ENCODE measurements at regions of chr2 and their contacts with region 1.

Region 1: GRCh38 chr2:172555522-172556283 is at the start of gene PDK1:
- DNase-seq: peak; percentile 97
- H3K4me3 Mint-ChIP-seq: peak within 1 kb of the TSS; percentile 98
- H3K27ac Mint-ChIP-seq: peak within 1 kb of the TSS; percentile 97
- H3K4me1 Mint-ChIP-seq: peaks cover 53% of the 10 kb centered on the region
- H3K27me3 Mint-ChIP-seq: no peaks in the 10 kb centered on the region
- total RNA-seq, gene PDK1: 42.6 and 46.9 TPM in 2 replicates

Region 2: GRCh38 chr2:170928824-170929685 is 1626.6 kb before region 1 on chr2 and contains the start of gene GORASP2:
- intact Hi-C with region 1: loop called (anchors 2 kb)
- DNase-seq: peak; percentile 99
- H3K4me3 Mint-ChIP-seq: peak within 1 kb of the TSS; percentile 92
- H3K27ac Mint-ChIP-seq: peak within 1 kb of the TSS; percentile 97
- H3K4me1 Mint-ChIP-seq: peaks cover 32% of the 10 kb centered on the region
- H3K27me3 Mint-ChIP-seq: no peaks in the 10 kb centered on the region
- total RNA-seq, gene GORASP2: 93.0 and 96.7 TPM in 2 replicates

Region 3: GRCh38 chr2:171687287-171688128 is 868.2 kb before region 1 on chr2 and contains the start of gene DYNC1I2:
- intact Hi-C with region 1: loop called (anchors 5 kb)
- DNase-seq: peak; percentile 92
- H3K4me3 Mint-ChIP-seq: peak within 1 kb of the TSS; percentile 80
- H3K27ac Mint-ChIP-seq: peak within 1 kb of the TSS; percentile 47
- H3K4me1 Mint-ChIP-seq: peaks cover 13% of the 10 kb centered on the region
- H3K27me3 Mint-ChIP-seq: peaks cover 15% of the 10 kb centered on the region
- total RNA-seq, gene DYNC1I2: 49.7 and 55.1 TPM in 2 replicates

Region 4: GRCh38 chr2:171922230-171923022 is 633.3 kb before region 1 on chr2 and contains the start of gene HAT1:
- intact Hi-C with region 1: loop called (anchors 1 kb)
- DNase-seq: peak; percentile 99
- H3K4me3 Mint-ChIP-seq: peak within 1 kb of the TSS; percentile 99
- H3K27ac Mint-ChIP-seq: peak within 1 kb of the TSS; percentile 95
- H3K4me1 Mint-ChIP-seq: peaks cover 28% of the 10 kb centered on the region
- H3K27me3 Mint-ChIP-seq: no peaks in the 10 kb centered on the region
- total RNA-seq, gene HAT1: 74.6 and 77.1 TPM in 2 replicates

Region 5: DNA sequence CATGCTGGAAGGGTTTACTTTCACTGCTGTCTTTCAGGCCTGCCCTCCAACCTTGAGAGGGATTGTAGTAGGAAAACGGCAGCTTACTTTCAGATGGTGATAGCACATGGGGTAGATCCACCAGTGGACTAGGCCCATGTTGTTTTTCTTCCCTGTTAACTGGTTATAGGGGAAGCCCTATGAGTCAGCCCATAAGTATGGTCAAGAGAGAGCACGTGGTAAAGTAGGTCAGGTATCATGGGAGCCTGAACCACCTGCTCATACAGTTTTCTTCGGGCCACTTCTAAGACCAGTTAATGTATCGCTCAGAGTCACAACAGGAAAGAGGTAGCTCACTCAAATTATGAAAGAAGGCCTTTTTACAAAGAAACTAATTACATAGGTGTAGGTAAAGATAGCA is 33.2 kb after region 1 on chr2:
- intact Hi-C with region 1: loop called (anchors 2 kb)
- DNase-seq: peak; percentile 30
- H3K4me3 Mint-ChIP-seq: no peak overlapping the region
- H3K27ac Mint-ChIP-seq: no peak overlapping the region
- H3K4me1 Mint-ChIP-seq: peaks cover 24% of the 10 kb centered on the region
- H3K27me3 Mint-ChIP-seq: no peaks in the 10 kb centered on the region

Region 6: DNA sequence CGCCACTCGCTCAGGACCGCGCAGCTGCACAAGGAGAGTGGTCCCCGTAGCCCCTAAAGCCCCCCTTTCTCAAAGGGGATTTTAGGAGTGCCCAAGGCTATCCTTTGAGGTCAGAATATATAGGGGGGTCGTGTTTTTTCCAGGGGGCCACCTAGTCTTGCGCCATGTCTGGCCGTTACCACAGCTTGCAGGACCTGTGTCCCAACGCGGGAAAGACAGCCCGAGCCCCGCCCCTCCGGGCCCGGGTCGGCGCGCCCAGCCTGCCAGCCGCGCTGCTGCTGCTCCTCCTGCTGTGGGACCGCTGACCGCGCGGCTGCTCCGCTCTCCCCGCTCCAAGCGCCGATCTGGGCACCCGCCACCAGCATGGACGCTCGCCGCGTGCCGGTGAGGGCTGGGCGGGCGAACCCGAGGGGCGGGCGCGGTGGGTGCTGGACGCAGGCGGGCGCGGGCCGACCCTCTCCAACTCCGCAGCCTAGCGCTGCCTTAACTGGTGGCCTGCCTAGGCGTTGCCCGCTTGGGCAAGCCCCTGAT is 799.0 kb after region 1 on chr2 and contains the start of gene CDCA7:
- intact Hi-C with region 1: loop called (anchors 10 kb)
- DNase-seq: peak; percentile 94
- H3K4me3 Mint-ChIP-seq: peak within 1 kb of the TSS; percentile 92
- H3K27ac Mint-ChIP-seq: peak within 1 kb of the TSS; percentile 92
- H3K4me1 Mint-ChIP-seq: peaks cover 39% of the 10 kb centered on the region
- H3K27me3 Mint-ChIP-seq: peaks cover 11% of the 10 kb centered on the region
- total RNA-seq, gene CDCA7: 116 and 118 TPM in 2 replicates

Measured in activated CD4-positive, alpha-beta T cell treated with anti-CD3 and anti-CD28 coated beads, Interleukin-2, amount 10 ng/mL, durations not matched to agents 24 days and 14 days (primary cell).